ENCODE measurements at regions of chr5 and their contacts with region 1.

Region 1: GRCh38 chr5:4295663-4296339 is 700.2 kb downstream of the IRX1 start:
- DNase-seq: peak; percentile 35
- H3K4me3 ChIP-seq: no peak overlapping the region
- H3K27ac ChIP-seq: no peak overlapping the region
- H3K4me1 ChIP-seq: peaks cover 2% of the 10 kb centered on the region
- H3K27me3 ChIP-seq: no peaks in the 10 kb centered on the region
- CTCF ChIP-seq: peak; percentile 66 to 81

Region 2: GRCh38 chr5:3595006-3595961 is 700.5 kb before region 1 on chr5 and contains the start of gene IRX1:
- CTCF ChIA-PET with region 1: no interaction called
- dilution Hi-C with region 1: no loop called
- in situ Hi-C with region 1: loop called (anchors 5 to 10 kb)
- intact Hi-C with region 1: loop called (anchors 1 kb)
- DNase-seq: peak; percentile 73
- H3K4me3 ChIP-seq: peak within 1 kb of the TSS; percentile 82 to 100 (median 97)
- H3K27ac ChIP-seq: peak within 1 kb of the TSS; percentile 96
- H3K4me1 ChIP-seq: peaks cover 14% of the 10 kb centered on the region
- H3K27me3 ChIP-seq: no peaks in the 10 kb centered on the region
- CTCF ChIP-seq: no peak
- total RNA-seq, gene IRX1: 29.8 to 200 TPM

Region 3: GRCh38 chr5:3904584-3904983 is 391.2 kb before region 1 on chr5:
- CTCF ChIA-PET with region 1: interaction called, 10 read pairs
- dilution Hi-C with region 1: no loop called
- in situ Hi-C with region 1: no loop called
- intact Hi-C with region 1: no loop called
- DNase-seq: no peak
- H3K4me3 ChIP-seq: no peak overlapping the region
- H3K27ac ChIP-seq: no peak overlapping the region
- H3K4me1 ChIP-seq: no peaks in the 10 kb centered on the region
- H3K27me3 ChIP-seq: no peaks in the 10 kb centered on the region
- CTCF ChIP-seq: no peak

Region 4: GRCh38 chr5:4082966-4083564 is 212.7 kb before region 1 on chr5:
- CTCF ChIA-PET with region 1: no interaction called
- dilution Hi-C with region 1: no loop called
- in situ Hi-C with region 1: no loop called
- intact Hi-C with region 1: loop called (anchors 5 kb)
- DNase-seq: peak; percentile 94
- H3K4me3 ChIP-seq: no peak overlapping the region
- H3K27ac ChIP-seq: peak overlapping the region; percentile 96
- H3K4me1 ChIP-seq: peaks cover 43% of the 10 kb centered on the region
- H3K27me3 ChIP-seq: no peaks in the 10 kb centered on the region
- CTCF ChIP-seq: no peak

Region 5: DNA sequence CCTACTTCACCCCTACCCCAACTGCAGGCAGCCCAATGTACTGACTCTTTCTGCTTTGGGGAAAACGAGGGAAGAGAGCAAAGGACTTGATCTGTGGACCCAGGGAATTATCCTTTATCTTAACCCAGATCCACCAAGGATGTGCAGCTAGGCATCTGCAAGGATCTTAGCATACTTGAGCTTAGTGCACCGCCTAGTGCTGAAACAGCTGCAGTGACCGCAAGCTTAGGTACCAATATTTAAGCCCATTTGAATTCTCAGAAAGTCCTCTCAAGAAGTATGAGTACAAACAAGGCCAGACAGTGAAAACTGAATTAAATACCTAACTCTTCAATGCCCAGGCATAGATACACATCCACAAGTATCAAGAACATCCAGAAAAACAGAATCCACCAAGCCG is 267.6 kb after region 1 on chr5:
- CTCF ChIA-PET with region 1: no interaction called
- dilution Hi-C with region 1: no loop called
- in situ Hi-C with region 1: no loop called
- intact Hi-C with region 1: loop called (anchors 2 kb)
- DNase-seq: peak; percentile 50
- H3K4me3 ChIP-seq: no peak overlapping the region
- H3K27ac ChIP-seq: no peak overlapping the region
- H3K4me1 ChIP-seq: no peaks in the 10 kb centered on the region
- H3K27me3 ChIP-seq: no peaks in the 10 kb centered on the region
- CTCF ChIP-seq: peak; percentile 88 to 89